ENCODE measurements at regions of chr19 and their contacts with region 1.

Region 1: DNA sequence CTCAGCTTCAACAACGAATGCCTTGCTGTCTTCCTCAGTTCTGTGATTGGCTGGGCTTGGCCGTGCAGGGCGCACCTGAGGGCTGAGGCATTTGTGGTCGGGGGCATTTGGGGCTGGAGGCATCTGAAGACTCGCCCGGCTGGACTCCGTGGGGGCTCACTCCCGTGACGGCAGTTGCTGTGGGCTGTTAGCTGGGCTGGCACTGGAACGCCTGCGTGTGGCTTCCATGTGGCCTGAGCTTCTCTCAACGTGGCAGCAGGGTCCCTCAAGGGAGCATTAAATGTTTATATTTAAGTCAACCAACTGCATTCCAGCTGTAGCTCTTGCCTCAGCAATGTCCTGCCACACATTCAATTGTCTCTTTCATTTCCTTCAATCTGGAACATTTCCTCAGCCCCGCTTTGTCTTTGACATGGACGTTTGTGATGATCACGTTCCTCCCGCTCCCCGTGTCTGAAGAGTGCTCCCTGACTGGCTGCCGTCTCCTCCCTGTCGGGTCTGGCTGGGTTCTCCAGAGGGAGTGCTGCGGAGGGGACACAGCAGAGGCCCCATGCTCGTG is 21.0 kb downstream of the CCDC8 start:
- DNase-seq: no peak
- H3K4me3 ChIP-seq: no peak overlapping the region
- CTCF ChIP-seq: no peak

Region 2: GRCh38 chr19:46133101-46133682 is 259.1 kb before region 1 on chr19:
- CTCF ChIA-PET with region 1: no interaction called
- POLR2A ChIA-PET with region 1: no interaction called
- DNase-seq: peak; percentile 97
- H3K4me3 ChIP-seq: peak overlapping the region; percentile 19
- CTCF ChIP-seq: no peak

Region 3: GRCh38 chr19:46378268-46378667 is 14.1 kb before region 1 on chr19:
- CTCF ChIA-PET with region 1: interaction called, 151 read pairs
- POLR2A ChIA-PET with region 1: interaction called, 4 read pairs
- DNase-seq: peak; percentile 59
- H3K4me3 ChIP-seq: no peak overlapping the region
- CTCF ChIP-seq: no peak

Region 4: DNA sequence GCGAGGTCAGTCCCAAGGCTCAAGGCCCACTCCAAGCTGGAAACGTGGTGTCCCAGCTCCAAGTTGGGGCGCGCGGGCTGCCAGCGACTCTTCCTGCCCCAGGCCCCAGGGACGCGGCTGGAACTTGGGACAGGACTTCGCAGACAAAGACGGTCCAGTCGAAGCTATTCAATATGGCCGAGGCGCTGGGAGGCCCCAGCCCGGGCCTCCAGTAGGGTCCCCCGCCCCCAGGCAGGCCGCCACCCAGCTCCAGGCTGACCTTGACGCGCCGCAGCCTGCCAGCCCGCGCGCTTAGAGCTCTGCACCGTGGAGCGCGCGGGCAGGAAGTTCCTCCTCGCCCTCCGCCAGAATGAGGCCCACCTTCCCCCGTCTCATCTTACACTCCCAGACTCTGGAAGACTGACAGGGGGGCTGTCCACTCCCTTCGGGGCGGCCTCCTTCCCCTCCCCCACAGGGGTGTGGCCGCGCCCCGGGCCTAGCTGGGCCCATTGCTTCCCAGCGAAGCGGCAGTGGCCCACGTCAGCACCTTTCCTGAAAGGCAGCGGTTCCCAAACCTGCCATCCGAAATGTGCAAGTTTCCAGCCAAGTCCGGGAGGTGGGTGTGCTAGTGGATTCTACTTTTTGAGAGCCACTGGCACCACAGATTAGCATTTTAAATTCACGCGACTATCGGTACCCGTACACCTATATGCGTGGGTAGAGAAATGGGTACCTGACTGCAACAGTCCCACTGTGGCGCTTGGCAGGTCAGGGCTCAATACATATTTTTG is 21.1 kb after region 1 on chr19 and contains the start of gene CCDC8:
- CTCF ChIA-PET with region 1: interaction called, 21 read pairs
- POLR2A ChIA-PET with region 1: no interaction called
- DNase-seq: peak; percentile 69
- H3K4me3 ChIP-seq: peak within 1 kb of the TSS; percentile 76
- CTCF ChIP-seq: no peak

Region 5: DNA sequence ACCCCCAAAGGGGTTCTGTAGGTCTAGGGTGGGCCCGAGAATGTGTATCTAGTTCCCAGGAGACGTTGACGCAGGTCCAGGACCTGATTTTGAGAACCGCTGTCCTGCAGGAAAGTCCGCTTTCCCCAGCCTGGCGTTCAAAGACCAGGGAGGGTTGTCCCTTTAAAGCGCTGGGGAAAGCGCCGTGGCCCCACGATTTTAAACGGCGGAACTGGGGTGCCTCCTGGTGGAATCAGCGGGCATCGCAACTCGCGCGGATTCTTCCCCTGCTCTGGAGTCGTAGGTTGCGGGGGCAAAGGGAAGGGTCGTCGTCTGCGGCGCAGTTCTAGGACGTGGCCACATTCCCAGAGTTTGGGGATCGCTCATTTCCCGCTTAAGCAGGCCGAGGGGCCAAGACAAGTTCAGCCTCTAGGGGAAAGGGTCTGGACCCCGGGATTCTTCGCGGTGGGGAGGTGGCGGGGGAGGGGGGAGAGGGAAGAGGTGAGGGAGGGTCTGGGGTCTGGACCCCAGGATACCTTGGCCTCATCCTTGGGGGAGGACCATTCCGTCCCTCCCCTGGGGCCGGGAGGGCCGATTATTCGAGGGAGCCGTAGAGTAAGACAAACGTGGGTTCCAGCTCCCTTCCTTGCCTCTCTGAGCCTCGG is 95.6 kb after region 1 on chr19:
- CTCF ChIA-PET with region 1: interaction called, 162 read pairs
- POLR2A ChIA-PET with region 1: no interaction called
- DNase-seq: no peak
- H3K4me3 ChIP-seq: peak overlapping the region; percentile 47
- CTCF ChIP-seq: peak; percentile 95

Region 6: GRCh38 chr19:46513461-46514236 is 121.3 kb after region 1 on chr19:
- CTCF ChIA-PET with region 1: interaction called, 63 read pairs
- POLR2A ChIA-PET with region 1: no interaction called
- DNase-seq: no peak
- H3K4me3 ChIP-seq: no peak overlapping the region
- CTCF ChIP-seq: peak; percentile 76

Region 7: DNA sequence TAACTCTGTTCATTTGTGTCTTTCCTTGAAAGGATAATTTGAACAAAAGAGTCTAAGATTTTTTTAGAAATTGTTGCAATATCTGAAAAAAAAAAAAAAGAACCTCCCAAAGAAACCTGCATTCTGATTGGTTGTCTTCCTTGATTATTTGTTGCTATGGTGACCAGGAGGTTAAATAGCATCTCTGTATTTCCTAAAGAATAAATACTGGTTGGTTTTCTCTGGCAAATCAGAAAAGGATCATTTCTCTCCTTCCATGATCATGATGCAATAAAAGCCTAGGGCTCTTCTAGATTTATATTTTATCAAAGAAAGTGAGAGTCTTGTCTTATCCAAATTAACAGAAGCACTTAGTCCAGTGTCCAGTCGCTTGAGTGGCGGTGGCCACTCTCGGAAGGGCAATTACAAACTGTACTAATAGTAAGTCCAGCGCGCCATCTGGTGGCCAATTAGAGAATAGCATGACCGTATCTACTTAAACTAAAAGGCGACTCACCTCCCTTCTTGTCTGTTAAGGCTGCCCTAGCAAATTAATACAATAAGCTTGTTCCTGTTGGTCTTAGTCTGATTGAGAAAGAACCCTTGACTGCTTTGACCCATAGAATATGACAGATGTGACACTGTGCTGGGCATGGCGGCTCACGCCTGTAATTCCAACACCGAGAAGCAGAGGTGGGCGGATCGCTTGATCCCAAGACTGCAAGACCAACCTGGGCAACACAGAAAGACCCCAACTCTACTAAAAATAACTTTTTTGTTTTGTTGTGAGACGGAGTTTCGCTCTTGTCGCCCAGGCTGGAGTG is 150.3 kb after region 1 on chr19:
- CTCF ChIA-PET with region 1: interaction called, 42 read pairs
- POLR2A ChIA-PET with region 1: no interaction called
- DNase-seq: peak; percentile 73
- H3K4me3 ChIP-seq: no peak overlapping the region
- CTCF ChIP-seq: peak; percentile 60